HEK293T (cell line): ENCODE measurements at regions of chr1 and their contacts with region 1.

Region 1: DNA sequence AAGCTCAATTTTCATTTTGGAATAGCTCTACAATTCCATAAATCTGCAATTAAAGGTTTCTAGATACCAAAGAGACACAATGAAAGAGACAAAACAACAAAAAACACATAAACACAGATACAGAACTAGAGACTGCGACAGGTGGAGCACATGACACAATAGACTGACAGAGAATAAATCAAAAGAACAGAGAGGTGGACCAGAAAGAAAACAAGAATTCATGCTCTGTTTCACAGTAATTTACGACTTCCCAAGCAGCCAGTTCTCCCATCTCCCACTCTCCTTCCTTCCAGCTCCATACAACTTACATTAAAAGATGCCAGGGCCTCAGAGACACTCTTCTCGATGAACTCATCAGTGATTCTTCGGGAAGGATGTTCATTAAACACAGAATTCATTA is 15.1 kb upstream of the RBM8A start:
- DNase-seq: no peak

Region 2: GRCh38 chr1:145706086-145706680 is 236.2 kb before region 1 on chr1:
- CTCF ChIA-PET with region 1: no interaction called
- POLR2A ChIA-PET with region 1: no interaction called
- DNase-seq: no peak

Region 3: DNA sequence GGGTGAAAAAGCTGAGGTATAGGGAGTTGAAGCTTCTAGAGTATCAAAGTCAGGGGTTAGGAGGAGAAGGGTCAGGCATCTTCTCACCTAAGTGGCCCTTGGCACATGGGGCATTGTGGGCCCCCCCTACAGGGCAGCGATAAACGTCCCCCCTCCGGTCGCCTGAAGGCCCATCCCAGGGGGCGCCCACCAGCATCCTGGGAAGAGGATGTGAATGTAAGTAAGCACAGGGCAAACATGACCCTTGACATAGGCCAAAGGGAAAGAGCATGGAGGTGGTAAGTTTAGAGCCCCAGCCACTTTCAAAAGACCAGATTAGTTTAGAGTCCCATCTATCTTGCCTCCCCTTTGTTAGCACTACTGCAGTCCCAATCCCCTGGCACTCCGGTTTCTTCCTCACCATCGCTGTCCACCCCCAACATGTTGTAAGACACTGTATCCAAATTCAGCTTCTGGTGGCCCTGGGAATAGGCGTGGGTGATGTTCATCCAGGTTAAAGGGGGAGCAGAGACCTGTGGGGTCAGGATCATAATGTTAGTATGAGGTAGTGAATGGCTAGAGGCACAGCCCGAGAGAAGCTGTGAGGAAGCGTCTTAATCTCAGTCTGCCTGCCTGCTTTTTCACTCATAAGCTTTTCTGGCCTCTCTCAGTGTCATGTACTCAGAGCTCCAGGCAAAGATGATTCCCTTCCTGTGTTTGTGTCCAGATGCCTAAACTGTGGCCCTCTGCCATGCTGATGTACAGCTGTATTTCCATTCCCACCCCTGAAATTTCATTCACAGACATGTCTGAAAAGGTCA is 35.3 kb before region 1 on chr1:
- CTCF ChIA-PET with region 1: no interaction called
- POLR2A ChIA-PET with region 1: no interaction called
- DNase-seq: no peak

Region 4: DNA sequence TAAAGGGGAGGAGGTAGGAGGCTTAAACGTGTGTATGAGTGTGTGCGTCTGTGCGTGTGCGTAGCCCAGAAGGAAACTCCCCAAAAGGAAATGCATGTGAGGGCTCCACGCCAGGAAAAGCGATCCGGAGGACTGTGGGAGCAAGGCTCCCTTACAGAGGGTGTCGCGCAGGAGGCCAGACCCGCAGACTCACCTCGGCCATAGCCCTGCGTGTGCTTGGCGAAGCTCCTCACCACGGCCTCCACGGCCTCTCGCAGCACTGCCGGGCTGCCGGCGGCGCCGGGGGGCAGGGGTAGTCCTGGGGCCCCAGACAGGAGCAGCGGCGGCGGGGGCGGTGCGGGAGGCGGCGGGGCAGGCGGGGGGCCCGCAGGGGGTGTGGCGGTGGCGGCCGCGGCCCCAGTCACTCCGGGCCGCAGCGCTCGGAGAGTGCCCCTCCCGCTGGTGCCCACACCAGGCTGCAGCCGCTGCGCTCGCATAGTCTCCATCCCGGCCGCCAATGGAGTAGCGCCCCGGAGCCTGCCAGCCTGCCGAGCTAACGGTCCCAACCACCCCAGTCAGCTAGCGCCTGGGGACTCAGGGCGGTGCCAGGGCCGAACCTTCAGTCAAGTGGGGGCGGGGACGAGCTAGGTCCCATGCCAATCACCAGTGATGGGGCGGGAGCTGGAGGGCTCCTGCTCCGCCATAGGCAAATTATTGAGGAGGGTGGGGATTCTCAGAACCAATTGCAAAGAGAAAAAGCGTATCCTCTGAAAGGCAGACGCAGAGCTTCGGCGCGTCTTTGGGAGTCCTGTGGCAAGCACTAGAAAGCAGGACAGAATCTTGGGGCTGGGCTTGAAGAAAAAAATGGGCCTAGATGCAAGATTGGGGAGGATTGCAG is 15.3 kb after region 1 on chr1 and contains the start of gene LIX1L:
- CTCF ChIA-PET with region 1: no interaction called
- POLR2A ChIA-PET with region 1: interaction called, 15 read pairs
- DNase-seq: peak; percentile 95